Natural killer cell (primary cell): ENCODE measurements at regions of chr6 and their contacts with region 1.

Region 1: DNA sequence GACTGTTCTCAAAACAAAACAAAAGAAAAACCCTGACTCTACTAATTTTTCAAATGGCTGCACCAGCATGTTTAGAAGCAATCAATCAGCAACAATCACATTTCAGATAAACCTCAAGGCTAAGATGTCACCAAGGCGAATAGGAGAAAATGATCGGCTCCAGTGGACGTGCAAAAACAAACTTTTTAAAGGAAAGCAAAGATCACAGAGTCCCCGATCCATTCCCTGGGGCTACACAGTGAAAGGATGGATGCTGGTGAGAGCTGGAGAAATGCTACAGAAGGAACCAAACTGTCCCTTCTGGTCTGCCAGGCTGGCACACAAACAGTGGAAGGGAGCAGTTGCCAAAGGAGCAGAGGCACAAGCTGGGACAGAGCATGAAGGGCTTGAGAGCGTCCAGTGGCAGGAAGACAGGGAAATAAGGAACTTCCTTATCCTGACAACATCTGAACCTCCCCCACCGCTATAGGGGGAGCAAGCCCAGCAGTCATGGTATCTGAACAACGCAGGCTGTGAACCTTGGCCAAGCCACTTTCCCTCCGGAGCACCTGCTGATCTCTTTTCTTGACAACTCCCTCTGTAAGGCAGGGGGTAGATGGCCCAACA is 73.7 kb upstream of the HIVEP1 start:
- DNase-seq: no peak
- ATAC-seq: no peak
- H3K4me3 ChIP-seq: no peak overlapping the region
- H3K4me3 Mint-ChIP-seq: no peak overlapping the region
- H3K27ac ChIP-seq: no peak overlapping the region
- H3K27ac Mint-ChIP-seq: no peak overlapping the region
- H3K4me1 ChIP-seq: no peaks in the 10 kb centered on the region
- H3K4me1 Mint-ChIP-seq: no peaks in the 10 kb centered on the region
- H3K27me3 ChIP-seq: no peaks in the 10 kb centered on the region
- H3K27me3 Mint-ChIP-seq: peaks cover 8 to 16% of the 10 kb centered on the region in 2 donors
- CTCF ChIP-seq: no peak

Region 2: DNA sequence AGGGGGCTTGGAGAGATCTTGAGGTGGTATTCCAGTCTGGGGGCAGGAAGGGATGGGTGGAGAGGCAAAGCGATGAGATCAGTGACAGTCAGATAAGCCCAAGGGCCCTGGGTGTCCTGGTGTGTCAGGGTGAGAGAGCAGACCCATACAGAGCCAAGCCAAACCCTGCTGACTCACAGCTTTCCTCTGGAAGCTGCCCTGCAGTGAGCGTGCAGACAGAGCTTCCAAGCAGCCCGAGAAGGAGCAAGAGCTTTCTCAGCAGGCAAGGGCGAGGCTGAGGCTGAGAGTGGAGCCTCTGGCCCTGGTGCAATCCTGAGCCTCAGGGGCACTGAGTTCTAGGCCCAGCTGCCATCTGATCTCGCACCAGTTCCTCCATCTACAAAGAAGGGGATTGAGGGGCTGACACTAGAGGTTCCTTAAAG is 17.4 kb before region 1 on chr6:
- intact Hi-C with region 1: no loop called
- DNase-seq: no peak
- ATAC-seq: peak in 1 of 3 donors; percentile 21
- H3K4me3 ChIP-seq: no peak overlapping the region
- H3K4me3 Mint-ChIP-seq: no peak overlapping the region
- H3K27ac ChIP-seq: no peak overlapping the region
- H3K27ac Mint-ChIP-seq: no peak overlapping the region
- H3K4me1 ChIP-seq: no peaks in the 10 kb centered on the region
- H3K4me1 Mint-ChIP-seq: no peaks in the 10 kb centered on the region
- H3K27me3 ChIP-seq: no peaks in the 10 kb centered on the region
- H3K27me3 Mint-ChIP-seq: peaks cover 0 to 5% of the 10 kb centered on the region in 2 donors
- CTCF ChIP-seq: no peak

Region 3: DNA sequence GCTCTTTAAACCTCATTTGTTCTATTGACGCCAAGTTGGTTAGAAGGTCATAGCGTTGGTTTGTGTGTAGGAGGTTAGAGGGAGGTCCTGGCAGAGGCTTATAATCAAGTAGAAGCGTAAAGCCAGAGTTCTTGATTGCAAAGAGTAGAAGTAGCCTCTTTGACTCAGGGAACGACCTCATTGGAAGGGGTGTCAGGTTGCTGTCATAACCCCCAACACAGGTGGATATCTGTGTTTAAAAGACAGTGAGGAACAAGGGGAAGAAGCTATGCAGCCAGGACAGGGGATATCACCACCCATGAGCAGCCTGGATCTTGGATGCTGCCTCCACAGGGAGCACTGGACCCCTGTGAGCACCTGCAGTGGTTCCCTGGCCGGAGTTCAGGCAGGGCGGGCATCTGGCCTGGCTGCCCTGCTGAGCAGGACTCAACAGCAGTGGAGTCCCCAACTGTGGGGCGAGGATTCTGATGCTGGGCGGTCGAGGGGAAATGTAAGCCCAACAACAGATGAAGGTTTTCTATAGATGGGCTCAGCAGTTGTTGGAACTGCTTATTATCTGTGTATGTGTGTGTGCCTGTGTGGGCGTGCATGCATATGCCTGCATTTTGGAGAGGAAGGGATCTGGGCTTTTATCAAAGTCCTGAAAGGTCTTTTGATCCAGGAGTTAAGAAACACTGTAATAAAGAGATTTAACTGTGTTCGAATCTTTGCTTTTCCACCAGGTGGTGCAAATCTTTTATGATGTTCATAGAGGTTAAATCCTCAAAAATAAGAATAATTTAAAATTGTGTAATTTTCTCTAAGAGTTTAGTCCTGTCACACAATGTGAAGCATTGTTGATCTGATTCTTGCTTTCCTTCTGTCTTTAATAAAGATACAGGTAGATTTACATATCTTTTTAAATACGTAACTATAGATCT is 101.4 kb after region 1 on chr6:
- intact Hi-C with region 1: loop called (anchors 5 kb)
- DNase-seq: no peak
- ATAC-seq: no peak
- H3K4me3 ChIP-seq: no peak overlapping the region
- H3K4me3 Mint-ChIP-seq: no peak overlapping the region
- H3K27ac ChIP-seq: no peak overlapping the region
- H3K27ac Mint-ChIP-seq: no peak overlapping the region
- H3K4me1 ChIP-seq: peaks cover 9% of the 10 kb centered on the region
- H3K4me1 Mint-ChIP-seq: peaks cover 34 to 38% of the 10 kb centered on the region in 2 donors
- H3K27me3 ChIP-seq: no peaks in the 10 kb centered on the region
- H3K27me3 Mint-ChIP-seq: no peaks in the 10 kb centered on the region
- CTCF ChIP-seq: no peak